H1 (cell line): ENCODE measurements at regions of chr12 and their contacts with region 1.

Region 1: DNA sequence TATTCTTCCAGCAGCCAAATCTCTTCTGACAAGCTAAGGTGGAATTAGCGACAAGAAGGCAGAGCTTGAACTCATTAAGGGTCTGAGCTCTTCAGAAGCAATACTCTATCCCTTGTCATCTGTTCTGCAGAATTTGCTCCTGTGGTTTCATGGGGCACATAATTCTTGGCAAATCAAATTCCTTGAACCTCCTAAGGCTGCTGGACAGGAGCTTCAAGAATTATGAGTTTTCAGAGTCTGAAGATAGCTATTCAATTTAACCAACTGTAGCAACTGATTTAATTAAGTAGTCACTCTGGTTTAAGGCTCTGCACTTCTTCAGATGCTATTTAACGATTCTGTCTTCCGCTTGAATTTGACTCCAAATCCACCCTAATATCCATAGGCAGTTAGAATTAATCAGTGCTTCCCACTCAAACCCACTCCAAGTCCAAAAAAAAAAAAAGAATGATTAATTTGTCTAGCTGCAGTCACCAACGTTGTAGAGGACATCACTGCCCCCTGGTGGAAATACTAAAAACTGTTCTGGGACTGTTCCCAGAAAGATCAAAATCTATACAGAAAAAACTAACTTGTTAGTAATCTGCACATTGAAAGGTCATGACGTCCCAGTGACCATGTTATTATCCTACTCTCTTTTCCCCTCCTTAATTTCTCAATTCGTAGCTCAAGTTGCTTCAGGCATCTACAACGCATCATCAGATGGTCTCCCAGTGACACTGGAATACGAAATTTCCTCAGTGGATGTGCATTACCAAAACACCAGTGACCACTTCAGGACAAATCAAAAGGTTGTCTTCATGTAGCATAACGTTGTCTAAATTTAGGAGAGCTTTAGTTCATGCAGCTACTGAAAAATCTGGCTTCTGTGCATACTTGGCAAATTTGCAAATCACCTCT is 169.8 kb downstream of the KIF21A start:
- DNase-seq: peak in 1 of 2 experiments; percentile 53
- H3K4me3 ChIP-seq: no peak overlapping the region
- H3K27ac ChIP-seq: no peak overlapping the region
- H3K4me1 ChIP-seq: no peaks in the 10 kb centered on the region
- H3K27me3 ChIP-seq: no peaks in the 10 kb centered on the region
- CTCF ChIP-seq: peak in 2 of 3 experiments; percentile 51 to 54; a peak in 2 of 4 replicates
- EP300 ChIP-seq: no peak
- POLR2A ChIP-seq: no peak
- RAD21 ChIP-seq: peak; percentile 80 to 82

Region 2: GRCh38 chr12:38906482-38907170 is 366.5 kb before region 1 on chr12:
- CTCF ChIA-PET with region 1: interaction called, 18 read pairs
- POLR2A ChIA-PET with region 1: no interaction called
- DNase-seq: peak; percentile 65 to 93
- H3K4me3 ChIP-seq: peak overlapping the region; percentile 63 to 75 (median 72)
- H3K27ac ChIP-seq: no peak overlapping the region
- H3K4me1 ChIP-seq: peaks cover 0 to 2% (median 0%) of the 10 kb centered on the region in 4 experiments; a peak in 1 of 7 replicates
- H3K27me3 ChIP-seq: peaks cover 0 to 10% (median 4%) of the 10 kb centered on the region in 4 experiments; a peak in 4 of 7 replicates
- CTCF ChIP-seq: peak; percentile 85 to 89 (median 86)
- EP300 ChIP-seq: peak in 1 of 2 experiments; percentile 82; a peak in 1 of 3 replicates
- POLR2A ChIP-seq: no peak; a peak in 1 of 3 replicates
- RAD21 ChIP-seq: peak; percentile 70 to 84

Region 3: GRCh38 chr12:39095636-39096330 is 177.3 kb before region 1 on chr12:
- CTCF ChIA-PET with region 1: interaction called, 10 read pairs
- POLR2A ChIA-PET with region 1: no interaction called
- DNase-seq: no peak
- H3K4me3 ChIP-seq: no peak overlapping the region
- H3K27ac ChIP-seq: no peak overlapping the region
- H3K4me1 ChIP-seq: peaks cover 0 to 3% (median 1%) of the 10 kb centered on the region in 4 experiments; a peak in 3 of 7 replicates
- H3K27me3 ChIP-seq: no peaks in the 10 kb centered on the region
- CTCF ChIP-seq: peak in 2 of 3 experiments; percentile 31 to 40; a peak in 3 of 4 replicates
- EP300 ChIP-seq: no peak
- POLR2A ChIP-seq: no peak
- RAD21 ChIP-seq: peak; percentile 56 to 67

Region 4: GRCh38 chr12:39103552-39104165 is 169.5 kb before region 1 on chr12:
- CTCF ChIA-PET with region 1: interaction called, 24 read pairs
- POLR2A ChIA-PET with region 1: no interaction called
- DNase-seq: no peak
- H3K4me3 ChIP-seq: no peak overlapping the region
- H3K27ac ChIP-seq: no peak overlapping the region
- H3K4me1 ChIP-seq: no peaks in the 10 kb centered on the region; a peak in 1 of 7 replicates
- H3K27me3 ChIP-seq: no peaks in the 10 kb centered on the region
- CTCF ChIP-seq: peak in 2 of 3 experiments; percentile 74 to 79; a peak in 3 of 4 replicates
- EP300 ChIP-seq: no peak
- POLR2A ChIP-seq: no peak
- RAD21 ChIP-seq: peak; percentile 93 to 95

Region 5: DNA sequence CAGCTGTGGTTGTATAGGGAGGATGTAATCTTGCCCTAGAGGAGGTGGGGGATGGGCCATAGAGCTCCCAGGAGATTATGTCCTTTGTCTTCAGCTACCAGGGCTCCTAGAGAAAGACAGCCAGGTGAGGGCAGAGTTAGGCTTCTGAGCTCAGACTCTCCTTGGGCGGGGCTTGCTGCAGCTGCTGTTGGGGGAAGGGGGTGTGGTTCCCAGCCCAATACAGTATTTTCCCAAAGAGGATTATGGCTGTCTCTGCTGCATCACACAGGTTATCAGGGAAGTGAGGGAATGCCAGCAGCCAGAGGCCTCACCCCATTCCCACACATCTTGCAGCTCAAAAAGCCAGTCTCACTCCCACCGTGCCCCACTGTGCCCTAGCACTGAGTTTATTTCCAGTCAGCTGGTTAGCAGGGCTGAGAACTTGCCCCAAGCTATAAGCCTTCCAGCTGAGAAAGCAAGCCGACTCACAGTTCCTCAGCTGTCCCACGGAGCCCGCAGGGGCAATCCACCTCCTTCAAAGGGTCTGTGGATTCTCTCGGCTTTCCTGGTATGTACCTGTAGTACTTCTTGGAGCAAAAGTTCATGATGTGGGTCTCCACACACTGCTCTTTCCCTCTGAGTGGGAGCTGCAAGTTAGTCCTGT is 150.4 kb before region 1 on chr12:
- CTCF ChIA-PET with region 1: interaction called, 21 read pairs
- POLR2A ChIA-PET with region 1: no interaction called
- DNase-seq: peak; percentile 60 to 63
- H3K4me3 ChIP-seq: peak overlapping the region in 1 of 4 experiments; percentile 16; a peak in 1 of 8 replicates
- H3K27ac ChIP-seq: peak overlapping the region; percentile 27; the same call in 1 of the 2 replicates
- H3K4me1 ChIP-seq: peaks cover 2 to 9% (median 5%) of the 10 kb centered on the region in 4 experiments; a peak in 5 of 7 replicates
- H3K27me3 ChIP-seq: no peaks in the 10 kb centered on the region
- CTCF ChIP-seq: peak in 2 of 3 experiments; percentile 32 to 33; a peak in 2 of 4 replicates
- EP300 ChIP-seq: no peak
- POLR2A ChIP-seq: no peak
- RAD21 ChIP-seq: peak; percentile 38 to 55; a peak in 3 of 4 replicates

Region 6: GRCh38 chr12:39252628-39253027 is 20.5 kb before region 1 on chr12:
- CTCF ChIA-PET with region 1: interaction called, 20 read pairs
- POLR2A ChIA-PET with region 1: no interaction called
- DNase-seq: no peak
- H3K4me3 ChIP-seq: no peak overlapping the region
- H3K27ac ChIP-seq: no peak overlapping the region
- H3K4me1 ChIP-seq: no peaks in the 10 kb centered on the region
- H3K27me3 ChIP-seq: no peaks in the 10 kb centered on the region
- CTCF ChIP-seq: no peak
- EP300 ChIP-seq: no peak
- POLR2A ChIP-seq: no peak
- RAD21 ChIP-seq: no peak

Region 7: DNA sequence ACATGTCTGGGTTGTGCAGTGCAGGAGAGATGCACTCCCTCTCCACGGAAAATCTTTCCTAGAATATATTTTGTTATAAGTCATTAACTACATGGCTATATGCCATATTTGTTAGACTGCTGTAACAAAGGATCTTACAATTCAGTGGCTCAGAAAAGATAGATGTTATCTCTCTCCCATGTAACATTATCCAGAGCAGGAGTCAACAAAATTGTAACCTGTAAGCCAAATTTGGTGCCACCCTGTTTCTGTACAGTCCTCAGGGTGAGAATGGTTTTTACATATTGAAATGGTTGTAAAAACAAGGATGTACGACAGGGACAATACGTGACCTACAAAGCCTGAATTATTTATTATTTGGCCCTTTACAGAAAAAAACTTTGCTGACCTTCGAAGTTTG is 14.3 kb after region 1 on chr12:
- CTCF ChIA-PET with region 1: interaction called, 13 read pairs
- POLR2A ChIA-PET with region 1: no interaction called
- DNase-seq: no peak
- H3K4me3 ChIP-seq: no peak overlapping the region
- H3K27ac ChIP-seq: no peak overlapping the region
- H3K4me1 ChIP-seq: no peaks in the 10 kb centered on the region
- H3K27me3 ChIP-seq: peaks cover 0 to 1% (median 0%) of the 10 kb centered on the region in 4 experiments; a peak in 1 of 7 replicates
- CTCF ChIP-seq: no peak
- EP300 ChIP-seq: no peak
- POLR2A ChIP-seq: no peak
- RAD21 ChIP-seq: no peak